CD4-positive, alpha-beta T cell (primary cell): ENCODE measurements at regions of chr22 and their contacts with region 1.

Region 1: GRCh38 chr22:39940757-39941305 is 19.4 kb upstream of the TMA7B start:
- DNase-seq: peak in 4 of 14 experiments; percentile 50 to 85 (median 78)
- ATAC-seq: peak; percentile 63
- H3K4me3 ChIP-seq: no peak overlapping the region
- H3K4me3 Mint-ChIP-seq: peak overlapping the region; percentile 59
- H3K27ac ChIP-seq: peak overlapping the region; percentile 42 to 68
- H3K27ac Mint-ChIP-seq: no peak overlapping the region
- H3K4me1 ChIP-seq: peaks cover 95% of the 10 kb centered on the region
- H3K4me1 Mint-ChIP-seq: peaks cover 95% of the 10 kb centered on the region
- H3K27me3 ChIP-seq: no peaks in the 10 kb centered on the region
- H3K27me3 Mint-ChIP-seq: no peaks in the 10 kb centered on the region
- CTCF ChIP-seq: peak; percentile 66

Region 2: DNA sequence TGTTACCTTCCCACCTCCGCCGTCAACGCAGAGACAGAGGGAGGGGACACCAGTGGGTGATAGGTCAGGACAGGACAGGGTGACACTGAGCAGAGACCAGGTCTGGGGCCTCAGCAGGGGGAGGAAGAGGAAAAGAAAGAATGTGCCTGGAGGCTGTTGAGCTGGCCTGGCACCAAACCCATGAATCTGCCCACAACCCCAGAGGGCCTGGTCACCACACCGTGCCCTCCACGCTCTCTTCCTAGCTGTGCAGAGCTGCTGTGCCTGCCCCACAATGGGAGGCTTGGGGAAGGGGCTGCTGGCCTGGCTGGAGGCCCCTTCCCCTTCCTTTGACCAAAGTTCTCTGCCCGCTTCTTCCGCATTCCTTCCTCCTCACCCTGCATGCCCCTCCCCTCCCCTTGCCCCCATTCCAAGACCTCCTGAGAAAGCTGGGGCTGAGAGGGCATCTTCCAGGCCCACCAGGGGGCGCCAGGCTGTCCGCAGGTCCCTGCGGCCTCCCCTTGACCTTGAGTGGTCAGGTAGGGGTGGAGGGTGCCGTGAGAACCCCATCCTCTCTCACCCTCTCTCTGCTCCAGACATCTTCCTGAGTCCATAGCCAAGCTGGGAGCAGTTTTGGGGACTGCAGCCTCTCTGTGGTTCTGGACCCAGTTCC is 381.3 kb before region 1 on chr22:
- CTCF ChIA-PET with region 1: no interaction called
- POLR2A ChIA-PET with region 1: no interaction called
- intact Hi-C with region 1: loop called (anchors 2 to 5 kb)
- DNase-seq: peak in 1 of 14 experiments; percentile 24
- ATAC-seq: no peak
- H3K4me3 ChIP-seq: no peak overlapping the region
- H3K4me3 Mint-ChIP-seq: no peak overlapping the region
- H3K27ac ChIP-seq: no peak overlapping the region
- H3K27ac Mint-ChIP-seq: no peak overlapping the region
- H3K4me1 ChIP-seq: peaks cover 15% of the 10 kb centered on the region
- H3K4me1 Mint-ChIP-seq: no peaks in the 10 kb centered on the region
- H3K27me3 ChIP-seq: peaks cover 29 to 38% of the 10 kb centered on the region in 2 experiments
- H3K27me3 Mint-ChIP-seq: peaks cover 19% of the 10 kb centered on the region
- CTCF ChIP-seq: no peak

Region 3: DNA sequence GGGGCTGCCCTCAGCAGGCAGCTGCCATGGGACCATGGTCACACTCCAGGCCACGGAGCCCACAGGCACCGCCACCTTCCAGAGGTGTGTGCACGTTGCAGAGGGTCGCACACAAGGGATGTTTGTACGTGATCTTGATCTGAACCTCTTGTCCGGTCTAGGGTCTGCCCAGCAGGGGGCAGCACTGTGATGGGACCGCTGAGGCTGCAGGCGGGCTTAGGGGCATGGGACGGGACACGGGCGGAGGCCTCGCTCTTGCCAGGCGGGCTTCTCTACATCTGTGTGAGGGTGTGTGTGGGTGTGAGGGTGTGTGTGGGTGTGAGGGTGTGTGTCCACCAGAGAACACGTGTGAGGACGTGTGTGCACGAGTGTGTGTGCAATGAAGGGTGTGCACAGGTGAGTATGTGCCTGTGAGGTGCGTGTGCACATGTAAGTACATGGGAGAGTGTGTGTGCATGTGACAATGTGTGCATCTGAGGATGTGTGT is 317.9 kb before region 1 on chr22:
- CTCF ChIA-PET with region 1: no interaction called
- POLR2A ChIA-PET with region 1: no interaction called
- intact Hi-C with region 1: loop called (anchors 1 kb)
- DNase-seq: peak; percentile 59 to 85 (median 65)
- ATAC-seq: peak; percentile 75
- H3K4me3 ChIP-seq: no peak overlapping the region
- H3K4me3 Mint-ChIP-seq: no peak overlapping the region
- H3K27ac ChIP-seq: no peak overlapping the region
- H3K27ac Mint-ChIP-seq: no peak overlapping the region
- H3K4me1 ChIP-seq: peaks cover 12% of the 10 kb centered on the region
- H3K4me1 Mint-ChIP-seq: peaks cover 10% of the 10 kb centered on the region
- H3K27me3 ChIP-seq: no peaks in the 10 kb centered on the region
- H3K27me3 Mint-ChIP-seq: peaks cover 6% of the 10 kb centered on the region
- CTCF ChIP-seq: peak; percentile 72

Region 4: GRCh38 chr22:39900306-39901227 is 40.3 kb before region 1 on chr22 and contains the start of gene GRAP2:
- CTCF ChIA-PET with region 1: interaction called, 5 read pairs
- POLR2A ChIA-PET with region 1: interaction called, 393 read pairs
- intact Hi-C with region 1: loop called (anchors 1 to 2 kb)
- DNase-seq: peak; percentile 54 to 94 (median 66)
- ATAC-seq: peak; percentile 96
- H3K4me3 ChIP-seq: peak within 1 kb of the TSS; percentile 70
- H3K4me3 Mint-ChIP-seq: peak within 1 kb of the TSS; percentile 89
- H3K27ac ChIP-seq: peak within 1 kb of the TSS; percentile 53 to 66
- H3K27ac Mint-ChIP-seq: no peak within 1 kb of the TSS
- H3K4me1 ChIP-seq: peaks cover 28% of the 10 kb centered on the region
- H3K4me1 Mint-ChIP-seq: peaks cover 23% of the 10 kb centered on the region
- H3K27me3 ChIP-seq: no peaks in the 10 kb centered on the region
- H3K27me3 Mint-ChIP-seq: no peaks in the 10 kb centered on the region
- CTCF ChIP-seq: no peak
- total RNA-seq, gene GRAP2: 65.3 to 75.6 TPM

Region 5: GRCh38 chr22:39917776-39918495 is 22.9 kb before region 1 on chr22:
- CTCF ChIA-PET with region 1: interaction called, 3 read pairs
- POLR2A ChIA-PET with region 1: interaction called, 393 read pairs
- intact Hi-C with region 1: no loop called
- DNase-seq: peak in 2 of 14 experiments; percentile 17 to 41
- ATAC-seq: no peak
- H3K4me3 ChIP-seq: peak overlapping the region; percentile 20
- H3K4me3 Mint-ChIP-seq: peak overlapping the region; percentile 52
- H3K27ac ChIP-seq: peak overlapping the region; percentile 61 to 73
- H3K27ac Mint-ChIP-seq: no peak overlapping the region
- H3K4me1 ChIP-seq: peaks cover 80% of the 10 kb centered on the region
- H3K4me1 Mint-ChIP-seq: peaks cover 92% of the 10 kb centered on the region
- H3K27me3 ChIP-seq: no peaks in the 10 kb centered on the region
- H3K27me3 Mint-ChIP-seq: no peaks in the 10 kb centered on the region
- CTCF ChIP-seq: no peak

Region 6: GRCh38 chr22:39927544-39927943 is 13.3 kb before region 1 on chr22:
- CTCF ChIA-PET with region 1: interaction called, 12 read pairs
- POLR2A ChIA-PET with region 1: interaction called, 70 read pairs
- intact Hi-C with region 1: loop called in 1 of 2 experiments (anchors 2 kb)
- DNase-seq: no peak
- ATAC-seq: no peak
- H3K4me3 ChIP-seq: peak overlapping the region; percentile 51
- H3K4me3 Mint-ChIP-seq: no peak overlapping the region
- H3K27ac ChIP-seq: peak overlapping the region; percentile 38 to 58
- H3K27ac Mint-ChIP-seq: no peak overlapping the region
- H3K4me1 ChIP-seq: peaks cover 89% of the 10 kb centered on the region
- H3K4me1 Mint-ChIP-seq: peaks cover 39% of the 10 kb centered on the region
- H3K27me3 ChIP-seq: no peaks in the 10 kb centered on the region
- H3K27me3 Mint-ChIP-seq: no peaks in the 10 kb centered on the region
- CTCF ChIP-seq: no peak